ENCODE measurements at regions of chr6 and their contacts with region 1.

Region 1: GRCh38 chr6:154298297-154298696 is 58.3 kb downstream of the IPCEF1 start:
- DNase-seq: no peak
- H3K4me3 ChIP-seq: no peak overlapping the region
- CTCF ChIP-seq: no peak
- POLR2A ChIP-seq: no peak

Region 2: DNA sequence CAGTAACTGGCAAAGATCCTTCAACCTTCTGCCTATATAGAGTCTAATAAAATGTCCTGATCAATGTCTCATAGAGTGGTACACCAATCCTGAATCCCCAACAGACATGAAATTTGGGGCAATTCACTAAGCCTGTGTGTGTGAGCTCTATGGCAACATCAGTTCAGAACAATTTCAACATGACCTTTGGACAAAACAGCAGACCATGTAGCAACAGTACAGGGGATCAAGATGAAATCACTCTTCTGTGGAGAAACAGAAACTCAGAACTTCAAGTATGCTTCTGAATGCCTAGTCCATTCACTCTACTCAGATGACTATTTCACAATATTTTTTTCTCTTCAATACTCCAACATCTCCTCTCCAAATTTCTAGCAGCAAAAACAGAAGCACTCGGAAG is 308.3 kb before region 1 on chr6:
- intact Hi-C with region 1: no loop called
- DNase-seq: no peak
- H3K4me3 ChIP-seq: no peak overlapping the region
- CTCF ChIP-seq: no peak
- POLR2A ChIP-seq: no peak

Region 3: DNA sequence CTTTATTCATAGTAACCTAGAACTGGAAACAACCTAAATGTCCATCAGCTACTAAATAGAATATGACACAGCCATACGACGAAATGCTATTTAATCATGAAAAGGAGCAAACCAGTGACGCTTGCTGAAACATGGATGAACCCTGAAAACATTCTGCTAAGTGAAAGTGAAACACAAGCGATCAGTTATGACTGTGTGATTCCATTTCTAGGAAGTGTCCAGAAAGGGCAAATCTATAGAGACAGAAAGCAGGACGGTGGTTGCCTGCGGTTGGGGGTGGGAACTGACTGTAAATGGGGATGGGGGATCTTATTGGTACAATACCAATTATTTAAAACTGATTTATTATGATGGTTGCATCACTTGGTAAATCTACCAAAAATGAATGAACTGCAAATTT is 68.5 kb before region 1 on chr6:
- intact Hi-C with region 1: no loop called
- DNase-seq: no peak
- H3K4me3 ChIP-seq: no peak overlapping the region
- CTCF ChIP-seq: no peak
- POLR2A ChIP-seq: no peak

Region 4: GRCh38 chr6:154343473-154344308 is 45.4 kb after region 1 on chr6:
- intact Hi-C with region 1: loop called (anchors 10 kb)
- DNase-seq: peak; percentile 72 to 89
- H3K4me3 ChIP-seq: no peak overlapping the region
- CTCF ChIP-seq: no peak
- POLR2A ChIP-seq: no peak

Measured in lower leg skin (tissue), 4 donors.